CD4-positive, alpha-beta T cell (primary cell): ENCODE measurements at regions of chr3 and their contacts with region 1.

Region 1: DNA sequence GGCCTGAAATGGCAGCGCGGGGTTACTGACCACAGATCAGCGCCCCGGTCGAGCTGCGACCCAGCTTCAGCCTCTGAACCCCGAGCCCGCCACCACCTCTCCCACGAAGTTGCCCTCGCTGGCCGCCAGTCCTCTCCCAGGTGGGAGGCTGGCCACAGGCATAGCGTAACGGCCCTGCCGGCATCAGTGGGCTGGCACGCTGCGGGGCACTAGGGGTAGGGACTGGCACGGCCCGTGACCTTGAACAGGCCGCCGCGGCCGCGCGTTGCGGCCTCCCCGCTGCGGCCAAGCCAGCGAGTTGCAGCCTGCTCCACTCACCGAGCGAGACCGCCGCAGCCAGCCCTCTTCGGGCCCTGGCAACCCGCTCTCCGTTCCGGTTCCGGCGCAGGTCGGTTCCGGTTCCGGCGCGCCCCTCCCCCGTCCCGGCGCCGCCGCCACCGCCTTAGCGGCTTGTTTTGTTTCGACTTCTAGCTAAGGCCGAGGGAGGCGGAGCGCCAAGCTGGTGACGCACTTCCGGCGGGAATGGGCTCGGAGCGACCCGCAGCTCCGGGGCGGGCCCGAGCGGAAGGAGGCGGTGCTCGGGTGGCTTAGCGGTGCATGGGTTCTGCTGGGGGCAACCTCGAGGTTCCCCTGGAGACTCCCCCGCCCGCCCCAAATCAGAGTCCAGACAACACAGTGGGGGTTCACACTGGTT is at the start of gene USP19:
- DNase-seq: peak; percentile 86 to 98 (median 94)
- ATAC-seq: peak; percentile 91
- H3K4me3 ChIP-seq: peak within 1 kb of the TSS; percentile 99
- H3K4me3 Mint-ChIP-seq: peak within 1 kb of the TSS; percentile 93
- H3K27ac ChIP-seq: peak within 1 kb of the TSS; percentile 87 to 95
- H3K27ac Mint-ChIP-seq: peak within 1 kb of the TSS; percentile 95
- H3K4me1 ChIP-seq: peaks cover 30% of the 10 kb centered on the region
- H3K4me1 Mint-ChIP-seq: peaks cover 23% of the 10 kb centered on the region
- H3K27me3 ChIP-seq: no peaks in the 10 kb centered on the region
- H3K27me3 Mint-ChIP-seq: no peaks in the 10 kb centered on the region
- CTCF ChIP-seq: no peak
- total RNA-seq, gene USP19: 84.9 to 86.2 TPM

Region 2: GRCh38 chr3:49007068-49007770 is 113.4 kb before region 1 on chr3 and contains the start of gene WDR6:
- CTCF ChIA-PET with region 1: no interaction called
- POLR2A ChIA-PET with region 1: interaction called, 17 read pairs
- intact Hi-C with region 1: no loop called
- DNase-seq: peak; percentile 93 to 99 (median 96)
- ATAC-seq: peak; percentile 86
- H3K4me3 ChIP-seq: peak within 1 kb of the TSS; percentile 99
- H3K4me3 Mint-ChIP-seq: peak within 1 kb of the TSS; percentile 99
- H3K27ac ChIP-seq: peak within 1 kb of the TSS; percentile 89 to 99
- H3K27ac Mint-ChIP-seq: peak within 1 kb of the TSS; percentile 97
- H3K4me1 ChIP-seq: peaks cover 25% of the 10 kb centered on the region
- H3K4me1 Mint-ChIP-seq: peaks cover 27% of the 10 kb centered on the region
- H3K27me3 ChIP-seq: no peaks in the 10 kb centered on the region
- H3K27me3 Mint-ChIP-seq: no peaks in the 10 kb centered on the region
- CTCF ChIP-seq: peak; percentile 19
- total RNA-seq, gene WDR6: 132 to 134 TPM

Region 3: DNA sequence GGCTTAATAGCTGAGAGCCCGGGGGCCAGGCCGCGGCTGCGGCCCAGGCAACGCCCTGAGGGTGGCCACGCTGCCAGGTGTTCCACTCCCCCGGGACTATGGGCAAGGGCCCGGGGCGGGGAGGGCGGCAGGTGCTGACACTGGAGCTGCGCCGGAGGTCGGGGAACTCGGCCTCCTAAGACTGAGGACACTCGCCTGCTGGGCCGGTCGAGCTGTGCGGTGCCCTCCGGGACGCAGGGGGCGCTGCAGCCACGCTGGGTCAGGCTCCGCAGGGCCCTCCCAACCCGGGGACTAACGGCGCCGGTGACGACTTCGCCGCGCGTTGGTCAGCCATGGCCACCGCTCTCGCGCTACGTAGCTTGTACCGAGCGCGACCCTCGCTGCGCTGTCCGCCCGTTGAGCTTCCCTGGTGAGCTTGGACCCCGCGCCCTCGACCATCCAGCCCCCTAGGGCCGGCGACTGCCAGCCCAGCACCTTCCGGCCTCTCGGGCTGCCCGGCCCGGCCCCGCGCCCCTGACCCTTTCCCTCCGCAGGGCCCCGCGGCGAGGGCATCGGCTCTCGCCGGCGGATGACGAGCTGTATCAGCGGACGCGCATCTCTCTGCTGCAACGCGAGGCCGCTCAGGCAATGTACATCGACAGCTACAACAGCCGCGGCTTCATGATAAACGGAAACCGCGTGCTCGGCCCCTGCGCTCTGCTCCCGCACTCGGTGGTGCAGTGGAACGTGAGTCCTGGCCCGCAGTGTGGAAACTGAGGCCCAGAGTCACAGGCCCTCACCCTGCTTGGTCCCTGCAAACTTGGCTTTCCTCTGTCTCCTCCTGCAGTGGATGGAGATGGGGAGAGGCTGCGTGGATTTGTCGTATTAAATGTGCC is 98.5 kb before region 1 on chr3 and contains the start of gene NDUFAF3:
- CTCF ChIA-PET with region 1: interaction called, 11 read pairs
- POLR2A ChIA-PET with region 1: interaction called, 22 read pairs
- intact Hi-C with region 1: loop called in 1 of 2 experiments (anchors 5 kb)
- DNase-seq: peak; percentile 81 to 95 (median 90)
- ATAC-seq: peak; percentile 74
- H3K4me3 ChIP-seq: peak within 1 kb of the TSS; percentile 80
- H3K4me3 Mint-ChIP-seq: peak within 1 kb of the TSS; percentile 95
- H3K27ac ChIP-seq: peak within 1 kb of the TSS; percentile 92 to 98
- H3K27ac Mint-ChIP-seq: peak within 1 kb of the TSS; percentile 90
- H3K4me1 ChIP-seq: peaks cover 63% of the 10 kb centered on the region
- H3K4me1 Mint-ChIP-seq: peaks cover 50% of the 10 kb centered on the region
- H3K27me3 ChIP-seq: no peaks in the 10 kb centered on the region
- H3K27me3 Mint-ChIP-seq: no peaks in the 10 kb centered on the region
- CTCF ChIP-seq: peak; percentile 99
- total RNA-seq, gene NDUFAF3: 52.7 to 53.2 TPM

Region 4: GRCh38 chr3:49104483-49105291 is 15.9 kb before region 1 on chr3 and contains the start of gene QARS1:
- CTCF ChIA-PET with region 1: no interaction called
- POLR2A ChIA-PET with region 1: interaction called, 22 read pairs
- intact Hi-C with region 1: loop called (anchors 1 kb)
- DNase-seq: peak; percentile 79 to 93 (median 85)
- ATAC-seq: peak; percentile 99
- H3K4me3 ChIP-seq: peak within 1 kb of the TSS; percentile 98
- H3K4me3 Mint-ChIP-seq: peak within 1 kb of the TSS; percentile 99
- H3K27ac ChIP-seq: peak within 1 kb of the TSS; percentile 71 to 78
- H3K27ac Mint-ChIP-seq: peak within 1 kb of the TSS; percentile 99
- H3K4me1 ChIP-seq: peaks cover 25% of the 10 kb centered on the region
- H3K4me1 Mint-ChIP-seq: peaks cover 31% of the 10 kb centered on the region
- H3K27me3 ChIP-seq: no peaks in the 10 kb centered on the region
- H3K27me3 Mint-ChIP-seq: no peaks in the 10 kb centered on the region
- CTCF ChIP-seq: no peak
- total RNA-seq, gene QARS1: 264 to 287 TPM

Region 5: DNA sequence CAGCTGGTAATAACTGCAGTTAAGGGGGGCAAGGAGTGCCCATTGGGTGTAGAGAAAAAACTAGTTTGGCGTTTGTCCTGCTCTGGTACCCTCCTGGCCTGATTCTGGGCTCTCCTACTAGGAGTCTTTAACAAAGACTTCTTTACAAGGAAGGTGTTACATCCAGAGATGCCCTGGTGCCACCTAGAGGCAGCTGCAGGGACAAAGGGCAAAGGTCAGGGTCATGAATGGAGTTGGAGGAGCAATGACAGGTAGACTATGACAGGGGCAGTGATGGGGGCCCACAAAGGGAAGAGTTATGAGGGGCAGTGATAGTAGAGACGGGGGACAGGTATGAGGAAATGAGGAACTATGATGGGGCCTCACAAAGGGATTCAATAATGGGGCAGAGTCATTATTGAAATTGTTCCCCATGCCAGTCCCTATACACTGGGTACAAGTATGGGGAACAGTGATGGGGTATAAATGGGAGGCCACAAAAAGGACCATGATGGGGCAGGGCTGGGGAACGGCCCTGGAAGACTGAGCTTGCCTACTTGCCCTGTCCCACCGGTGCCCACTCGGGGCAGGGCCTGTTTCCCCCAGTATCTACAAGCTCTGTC is 37.6 kb after region 1 on chr3:
- CTCF ChIA-PET with region 1: no interaction called
- POLR2A ChIA-PET with region 1: interaction called, 6 read pairs
- intact Hi-C with region 1: loop called in 1 of 2 experiments (anchors 1 kb)
- DNase-seq: peak; percentile 48 to 83 (median 66)
- ATAC-seq: peak; percentile 98
- H3K4me3 ChIP-seq: no peak overlapping the region
- H3K4me3 Mint-ChIP-seq: peak overlapping the region; percentile 9
- H3K27ac ChIP-seq: peak overlapping the region in 1 of 2 donors; percentile 16
- H3K27ac Mint-ChIP-seq: peak overlapping the region; percentile 3
- H3K4me1 ChIP-seq: peaks cover under 1% of the 10 kb centered on the region
- H3K4me1 Mint-ChIP-seq: peaks cover 5% of the 10 kb centered on the region
- H3K27me3 ChIP-seq: no peaks in the 10 kb centered on the region
- H3K27me3 Mint-ChIP-seq: no peaks in the 10 kb centered on the region
- CTCF ChIP-seq: peak; percentile 63

Region 6: DNA sequence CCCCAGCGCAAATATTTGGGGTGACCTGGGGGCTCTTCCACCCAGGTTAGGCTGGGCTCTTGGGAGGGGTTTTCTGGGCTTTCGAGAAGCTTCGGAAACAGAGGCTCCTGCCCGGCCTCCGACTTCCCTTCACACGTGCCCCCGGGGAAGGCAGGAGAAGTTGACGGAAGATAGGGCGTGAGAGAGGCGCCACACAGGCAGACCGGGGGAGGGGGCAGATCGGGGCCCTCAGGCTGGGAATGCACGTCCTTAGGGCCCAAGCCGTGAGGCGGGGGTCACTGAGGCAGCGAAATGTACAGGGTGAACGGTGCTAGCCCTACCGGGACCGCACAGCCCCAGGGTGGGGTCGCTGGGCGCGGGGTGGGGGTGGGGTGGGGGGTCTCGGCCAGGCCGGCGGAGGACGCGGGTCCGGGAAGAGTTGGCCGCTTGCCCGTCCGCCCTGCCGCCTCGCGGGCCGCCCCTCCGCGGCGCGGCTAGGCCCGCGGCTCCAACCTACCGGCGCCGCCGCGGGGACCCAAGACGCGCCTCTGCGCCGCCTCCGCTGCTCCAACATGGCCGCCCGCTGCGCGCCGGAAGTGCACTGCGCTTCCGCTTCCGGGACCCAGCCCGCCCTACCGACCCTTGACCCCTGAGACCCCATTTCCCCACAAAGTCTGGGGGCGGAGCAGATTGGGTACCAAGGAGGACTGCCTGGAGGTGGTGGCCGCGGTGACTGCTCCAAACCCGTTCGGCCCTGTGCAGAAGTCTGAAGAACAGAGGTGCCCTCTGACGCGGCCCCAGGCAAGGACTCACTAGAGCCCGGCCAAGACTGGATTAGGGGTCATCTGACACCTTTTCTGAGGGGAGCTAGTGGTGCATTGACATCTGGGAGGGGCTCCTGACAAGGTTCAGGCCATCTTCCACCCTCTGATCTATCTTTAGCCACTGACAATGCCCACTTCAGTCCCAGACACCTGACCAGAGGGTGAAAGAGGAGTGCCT is 45.5 kb after region 1 on chr3 and contains the start of gene CCDC71:
- CTCF ChIA-PET with region 1: interaction called, 5 read pairs
- POLR2A ChIA-PET with region 1: interaction called, 6 read pairs
- intact Hi-C with region 1: loop called (anchors 1 to 2 kb)
- DNase-seq: peak; percentile 55 to 89 (median 70)
- ATAC-seq: peak; percentile 80
- H3K4me3 ChIP-seq: peak within 1 kb of the TSS; percentile 94
- H3K4me3 Mint-ChIP-seq: peak within 1 kb of the TSS; percentile 97
- H3K27ac ChIP-seq: peak within 1 kb of the TSS; percentile 48 to 61
- H3K27ac Mint-ChIP-seq: peak within 1 kb of the TSS; percentile 91
- H3K4me1 ChIP-seq: peaks cover 31% of the 10 kb centered on the region
- H3K4me1 Mint-ChIP-seq: peaks cover 44% of the 10 kb centered on the region
- H3K27me3 ChIP-seq: no peaks in the 10 kb centered on the region
- H3K27me3 Mint-ChIP-seq: no peaks in the 10 kb centered on the region
- CTCF ChIP-seq: no peak
- total RNA-seq, gene CCDC71: 14.7 to 16.0 TPM

Region 7: GRCh38 chr3:49759226-49759625 is 638.6 kb after region 1 on chr3:
- CTCF ChIA-PET with region 1: no interaction called
- POLR2A ChIA-PET with region 1: no interaction called
- intact Hi-C with region 1: no loop called
- DNase-seq: no peak
- ATAC-seq: no peak
- H3K4me3 ChIP-seq: no peak overlapping the region
- H3K4me3 Mint-ChIP-seq: no peak overlapping the region
- H3K27ac ChIP-seq: no peak overlapping the region
- H3K27ac Mint-ChIP-seq: no peak overlapping the region
- H3K4me1 ChIP-seq: peaks cover 3% of the 10 kb centered on the region
- H3K4me1 Mint-ChIP-seq: peaks cover 40% of the 10 kb centered on the region
- H3K27me3 ChIP-seq: no peaks in the 10 kb centered on the region
- H3K27me3 Mint-ChIP-seq: no peaks in the 10 kb centered on the region
- CTCF ChIP-seq: no peak